Posterior vena cava (tissue), 2 donors: ENCODE measurements at regions of chr14 and their contacts with region 1.

Region 1: GRCh38 chr14:95413289-95414215 is 93.8 kb upstream of the CLMN start:
- DNase-seq: peak; percentile 67

Region 2: GRCh38 chr14:95330646-95331370 is 82.7 kb before region 1 on chr14:
- intact Hi-C with region 1: loop called in 1 of 2 experiments (anchors 10 kb)
- DNase-seq: no peak